ENCODE measurements at regions of chr6 and their contacts with region 1.

Region 1: GRCh38 chr6:10609995-10610688 is 84.3 kb downstream of the C6orf52 start:
- DNase-seq: no peak

Region 2: DNA sequence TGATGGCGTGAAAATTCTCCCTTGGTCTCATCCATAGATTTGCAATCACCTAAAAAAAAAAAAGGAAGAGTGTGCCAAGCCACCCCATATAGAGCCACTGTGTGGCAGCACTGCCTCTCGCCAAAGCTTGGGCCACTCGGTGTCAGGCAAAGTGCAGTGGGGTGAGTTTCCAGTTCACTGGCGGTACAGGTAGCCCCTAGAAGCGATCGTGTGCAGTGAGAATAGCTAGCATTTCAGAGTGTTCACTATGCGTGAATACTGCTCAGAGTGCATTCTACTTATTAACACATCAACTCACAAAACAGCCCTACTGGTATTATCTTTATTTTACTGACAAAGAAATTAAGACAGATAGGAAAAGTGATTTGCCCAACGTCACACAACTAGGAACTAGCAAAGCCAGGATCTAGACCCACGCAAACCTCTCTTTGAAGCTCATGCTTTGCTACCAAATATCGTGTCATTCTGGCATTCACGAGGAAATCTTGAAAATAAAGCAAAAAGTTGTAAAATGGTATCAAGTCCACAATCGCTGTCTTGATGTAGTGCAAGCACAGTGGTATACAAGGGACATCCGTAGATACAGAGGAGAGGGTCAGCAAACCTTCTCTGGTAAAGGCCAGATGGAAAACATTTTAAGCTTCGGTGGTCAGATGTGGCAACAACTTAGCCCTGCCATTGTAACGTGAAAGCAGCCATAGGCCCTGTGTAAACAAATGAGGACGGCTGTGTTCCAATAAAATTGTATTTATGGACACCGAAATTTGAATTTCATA is 99.4 kb before region 1 on chr6:
- in situ Hi-C with region 1: loop called (anchors 5 kb)
- DNase-seq: peak; percentile 79

Region 3: DNA sequence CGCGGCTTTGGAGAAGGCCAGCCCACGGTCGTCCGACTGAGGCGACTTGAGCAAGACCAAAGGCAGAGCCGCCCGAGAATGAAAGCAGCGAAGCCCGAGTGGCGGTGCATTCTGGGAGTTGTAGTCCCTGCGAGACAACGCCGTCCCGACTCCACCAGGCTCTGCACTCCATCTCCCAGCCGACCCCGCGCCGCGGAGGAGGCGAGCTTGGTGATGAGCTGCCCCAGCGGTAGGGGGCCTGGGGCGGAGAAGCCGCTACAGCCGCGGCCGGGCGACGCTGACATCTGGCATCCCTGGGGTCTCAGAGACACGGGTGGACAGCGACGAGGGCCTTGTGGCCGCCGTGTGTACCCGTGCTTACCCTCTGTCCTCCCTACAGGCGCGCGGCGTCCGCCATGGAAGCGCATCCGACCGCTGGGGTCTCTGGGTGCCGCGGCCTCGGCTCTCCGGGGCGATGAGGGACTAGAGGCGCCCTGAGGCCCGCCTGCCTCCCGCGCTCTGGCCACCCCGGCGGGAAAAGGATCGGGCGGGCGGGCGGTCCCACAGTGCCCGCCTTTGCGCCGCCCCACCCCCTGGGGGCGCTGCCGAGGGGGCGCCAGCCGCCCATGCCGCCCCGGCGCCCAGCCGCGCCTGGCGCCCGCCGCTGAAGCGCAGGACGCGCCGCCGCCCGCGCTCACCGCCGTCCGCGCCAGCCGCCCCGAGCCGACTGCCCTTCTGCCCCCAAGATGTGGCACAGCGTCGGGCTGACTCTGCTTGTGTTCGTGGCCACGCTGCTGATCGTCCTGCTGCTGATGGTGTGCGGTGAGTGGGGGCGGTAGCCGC is 483.7 kb after region 1 on chr6 and contains the start of gene SMIM13:
- in situ Hi-C with region 1: no loop called
- DNase-seq: peak; percentile 97
- total RNA-seq, gene SMIM13: 17.2 and 18.4 TPM in 2 replicates

Region 4: DNA sequence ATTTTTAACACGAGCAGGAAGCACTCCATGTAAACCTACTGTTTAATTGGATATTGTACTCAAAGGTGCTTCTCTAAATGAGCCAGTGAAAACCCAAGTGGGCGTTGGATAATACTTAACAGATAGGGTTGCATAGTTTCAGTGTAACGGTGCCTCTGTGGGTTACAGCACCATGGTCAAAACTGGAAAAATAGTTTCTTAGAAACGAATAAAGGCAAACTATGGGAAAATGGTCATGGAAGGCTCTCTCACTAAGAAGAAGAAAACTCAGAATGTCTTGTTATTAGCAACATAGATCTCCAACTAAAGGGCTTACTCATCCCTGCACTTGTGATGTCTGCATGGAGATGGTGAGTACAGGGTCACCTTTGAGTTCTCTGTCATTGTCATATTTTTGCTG is 681.4 kb after region 1 on chr6:
- in situ Hi-C with region 1: no loop called
- DNase-seq: no peak

Measured in Caki2 (cell line).